ENCODE measurements at regions of chr5 and their contacts with region 1.

Region 1: DNA sequence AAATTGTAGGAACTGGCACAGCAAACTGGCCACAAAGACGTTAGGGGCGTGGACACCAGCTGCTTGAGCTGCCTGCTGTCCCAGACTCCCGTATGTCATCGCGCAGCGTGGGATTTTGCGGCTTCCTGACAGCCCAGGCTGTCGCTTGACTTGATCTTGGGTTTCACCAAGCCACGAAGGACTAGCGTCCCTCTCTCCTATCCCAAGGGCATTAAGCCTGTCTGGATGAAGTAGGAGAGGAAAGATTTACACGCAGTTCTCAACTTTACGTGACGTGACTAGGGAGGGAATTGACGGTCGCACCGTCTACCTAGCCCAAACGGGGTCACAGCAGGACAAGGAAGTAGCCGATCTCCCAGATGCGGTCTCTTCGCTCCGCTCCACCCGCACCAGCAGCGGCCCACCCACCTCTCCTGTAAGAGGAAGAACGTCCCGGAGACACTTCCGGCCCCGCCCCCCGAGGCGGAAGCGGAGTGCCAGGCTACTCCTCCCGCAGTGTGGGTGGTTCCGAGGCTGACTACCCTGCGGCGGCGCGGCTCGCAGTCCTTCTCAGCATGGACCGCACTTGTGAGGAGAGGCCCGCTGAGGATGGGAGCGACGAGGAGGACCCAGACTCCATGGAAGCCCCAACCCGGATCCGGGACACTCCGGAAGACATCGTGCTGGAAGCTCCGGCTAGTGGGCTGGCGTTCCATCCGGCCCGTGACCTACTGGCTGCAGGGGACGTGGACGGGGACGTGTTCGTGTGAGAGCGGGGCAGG is at the start of gene WDR55:
- DNase-seq: peak; percentile 86 to 97
- ATAC-seq: peak; percentile 95 to 97 (median 95)
- H3K4me3 ChIP-seq: peak within 1 kb of the TSS; percentile 99
- H3K4me3 Mint-ChIP-seq: peak within 1 kb of the TSS; percentile 99
- H3K27ac ChIP-seq: peak within 1 kb of the TSS; percentile 90
- H3K27ac Mint-ChIP-seq: peak within 1 kb of the TSS; percentile 96
- H3K4me1 ChIP-seq: peaks cover 21% of the 10 kb centered on the region
- H3K4me1 Mint-ChIP-seq: peaks cover 33 to 38% of the 10 kb centered on the region in 2 donors
- H3K27me3 ChIP-seq: no peaks in the 10 kb centered on the region
- H3K27me3 Mint-ChIP-seq: no peaks in the 10 kb centered on the region
- CTCF ChIP-seq: no peak
- total RNA-seq, gene WDR55: 42.3 to 45.1 (median 43.3) TPM

Region 2: GRCh38 chr5:140630296-140631035 is 34.1 kb before region 1 on chr5:
- intact Hi-C with region 1: no loop called
- DNase-seq: no peak
- ATAC-seq: no peak
- H3K4me3 ChIP-seq: no peak overlapping the region
- H3K4me3 Mint-ChIP-seq: peak overlapping the region; percentile 69
- H3K27ac ChIP-seq: peak overlapping the region; percentile 11
- H3K27ac Mint-ChIP-seq: no peak overlapping the region
- H3K4me1 ChIP-seq: peaks cover 18% of the 10 kb centered on the region
- H3K4me1 Mint-ChIP-seq: peaks cover 14 to 26% of the 10 kb centered on the region in 2 donors
- H3K27me3 ChIP-seq: peaks cover 4% of the 10 kb centered on the region
- H3K27me3 Mint-ChIP-seq: peaks cover 19 to 30% of the 10 kb centered on the region in 2 donors
- CTCF ChIP-seq: no peak

Region 3: DNA sequence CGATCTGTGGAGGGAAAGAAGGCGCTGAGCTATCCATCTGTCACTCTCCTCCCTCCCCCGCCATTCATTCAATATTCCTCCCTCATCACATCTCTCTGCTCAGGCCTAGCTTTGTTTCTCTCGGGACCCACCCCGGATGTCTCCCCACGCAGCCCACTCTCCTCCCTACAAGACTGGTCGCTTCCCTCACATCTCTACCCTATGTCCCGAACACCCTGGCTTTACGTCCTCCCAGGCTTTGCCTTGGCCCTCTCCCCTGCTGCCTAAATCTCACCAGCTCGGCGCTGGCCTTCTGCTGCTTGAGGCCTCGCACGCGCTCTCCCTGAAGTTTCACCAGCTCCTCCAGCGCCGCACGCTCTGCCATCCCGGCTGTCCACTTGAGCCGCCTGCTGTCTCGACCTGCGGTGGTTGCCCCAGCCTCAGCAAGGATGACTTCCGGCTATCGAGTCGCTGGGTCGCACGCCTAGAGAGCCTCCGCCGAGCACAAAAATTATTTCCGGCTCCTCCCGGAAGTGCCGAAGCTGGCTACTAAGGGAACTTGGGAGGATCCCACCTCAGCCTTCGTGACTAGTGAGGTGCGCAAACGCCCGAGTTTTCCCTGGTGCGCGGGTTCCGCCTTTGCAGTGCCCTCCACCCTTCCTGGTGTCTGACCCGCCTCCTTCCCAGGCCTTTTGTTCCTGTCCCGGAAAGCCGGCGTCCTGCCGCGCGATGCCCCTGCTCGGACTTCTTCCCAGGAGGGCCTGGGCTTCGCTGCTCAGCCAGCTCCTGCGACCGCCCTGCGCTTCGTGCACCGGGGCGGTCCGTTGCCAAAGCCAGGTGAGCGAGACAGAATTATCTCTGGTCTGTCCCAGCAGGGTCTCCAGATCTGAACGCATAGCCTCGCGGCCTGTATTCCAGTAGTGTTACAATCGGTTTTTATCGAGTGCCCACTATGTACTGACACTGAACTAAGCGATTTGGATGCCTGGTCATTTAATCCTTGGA is 26.7 kb after region 1 on chr5 and contains the starts of genes HARS1 and HARS2:
- intact Hi-C with region 1: loop called (anchors 2 kb)
- DNase-seq: peak; percentile 70 to 91
- ATAC-seq: peak; percentile 95 to 97 (median 97)
- H3K4me3 ChIP-seq: peak within 1 kb of the TSS; percentile 77
- H3K4me3 Mint-ChIP-seq: peak within 1 kb of the TSS; percentile 100
- H3K27ac ChIP-seq: peak within 1 kb of the TSS; percentile 64
- H3K27ac Mint-ChIP-seq: peak within 1 kb of the TSS; percentile 92 to 94
- H3K4me1 ChIP-seq: peaks cover 16% of the 10 kb centered on the region
- H3K4me1 Mint-ChIP-seq: peaks cover 31 to 54% of the 10 kb centered on the region in 2 donors
- H3K27me3 ChIP-seq: no peaks in the 10 kb centered on the region
- H3K27me3 Mint-ChIP-seq: no peaks in the 10 kb centered on the region
- CTCF ChIP-seq: no peak
- total RNA-seq, gene HARS1: 62.4 to 73.8 (median 68.3) TPM
- total RNA-seq, gene HARS2: 42.5 to 48.4 (median 45.6) TPM

Region 4: DNA sequence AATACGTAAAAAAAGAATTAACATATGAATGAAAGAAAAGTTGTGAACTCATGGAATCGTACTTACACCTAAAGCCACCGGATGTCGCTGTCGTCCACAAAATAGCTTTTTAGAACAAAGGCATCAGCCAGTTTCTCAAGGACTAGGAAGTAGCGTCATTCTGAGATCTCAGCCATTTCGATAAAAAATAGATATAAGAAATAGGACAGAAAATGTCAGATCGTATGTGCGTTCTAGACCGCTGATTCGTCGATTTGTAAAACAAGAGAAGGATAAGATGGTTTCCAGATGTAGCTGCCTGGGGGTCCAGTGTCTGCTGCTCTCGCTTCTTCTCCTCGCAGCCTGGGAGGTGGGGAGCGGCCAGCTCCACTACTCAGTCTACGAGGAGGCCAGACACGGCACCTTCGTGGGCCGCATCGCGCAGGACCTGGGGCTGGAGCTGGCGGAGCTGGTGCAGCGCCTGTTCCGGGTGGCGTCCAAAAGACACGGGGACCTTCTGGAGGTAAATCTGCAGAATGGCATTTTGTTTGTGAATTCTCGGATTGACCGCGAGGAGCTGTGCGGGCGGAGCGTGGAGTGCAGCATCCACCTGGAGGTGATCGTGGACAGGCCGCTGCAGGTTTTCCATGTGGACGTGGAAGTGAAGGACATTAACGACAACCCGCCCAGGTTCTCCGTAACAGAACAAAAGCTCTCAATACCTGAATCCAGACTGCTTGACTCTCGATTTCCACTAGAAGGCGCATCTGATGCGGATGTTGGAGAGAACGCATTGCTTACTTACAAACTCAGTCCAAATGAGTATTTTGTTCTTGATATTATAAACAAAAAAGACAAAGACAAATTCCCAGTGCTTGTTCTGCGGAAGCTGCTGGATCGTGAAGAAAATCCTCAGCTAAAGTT is 191.5 kb after region 1 on chr5 and contains the start of gene PCDHA10:
- intact Hi-C with region 1: no loop called
- DNase-seq: no peak
- ATAC-seq: no peak
- H3K4me3 ChIP-seq: no peak within 1 kb of the TSS
- H3K4me3 Mint-ChIP-seq: no peak within 1 kb of the TSS
- H3K27ac ChIP-seq: no peak within 1 kb of the TSS
- H3K27ac Mint-ChIP-seq: no peak within 1 kb of the TSS
- H3K4me1 ChIP-seq: no peaks in the 10 kb centered on the region
- H3K4me1 Mint-ChIP-seq: no peaks in the 10 kb centered on the region
- H3K27me3 ChIP-seq: peaks cover 4% of the 10 kb centered on the region
- H3K27me3 Mint-ChIP-seq: peaks cover 0 to 5% of the 10 kb centered on the region in 2 donors
- CTCF ChIP-seq: no peak
- total RNA-seq, gene PCDHA10: not detected